ENCODE measurements at regions of chr15 and their contacts with region 1.

Region 1: DNA sequence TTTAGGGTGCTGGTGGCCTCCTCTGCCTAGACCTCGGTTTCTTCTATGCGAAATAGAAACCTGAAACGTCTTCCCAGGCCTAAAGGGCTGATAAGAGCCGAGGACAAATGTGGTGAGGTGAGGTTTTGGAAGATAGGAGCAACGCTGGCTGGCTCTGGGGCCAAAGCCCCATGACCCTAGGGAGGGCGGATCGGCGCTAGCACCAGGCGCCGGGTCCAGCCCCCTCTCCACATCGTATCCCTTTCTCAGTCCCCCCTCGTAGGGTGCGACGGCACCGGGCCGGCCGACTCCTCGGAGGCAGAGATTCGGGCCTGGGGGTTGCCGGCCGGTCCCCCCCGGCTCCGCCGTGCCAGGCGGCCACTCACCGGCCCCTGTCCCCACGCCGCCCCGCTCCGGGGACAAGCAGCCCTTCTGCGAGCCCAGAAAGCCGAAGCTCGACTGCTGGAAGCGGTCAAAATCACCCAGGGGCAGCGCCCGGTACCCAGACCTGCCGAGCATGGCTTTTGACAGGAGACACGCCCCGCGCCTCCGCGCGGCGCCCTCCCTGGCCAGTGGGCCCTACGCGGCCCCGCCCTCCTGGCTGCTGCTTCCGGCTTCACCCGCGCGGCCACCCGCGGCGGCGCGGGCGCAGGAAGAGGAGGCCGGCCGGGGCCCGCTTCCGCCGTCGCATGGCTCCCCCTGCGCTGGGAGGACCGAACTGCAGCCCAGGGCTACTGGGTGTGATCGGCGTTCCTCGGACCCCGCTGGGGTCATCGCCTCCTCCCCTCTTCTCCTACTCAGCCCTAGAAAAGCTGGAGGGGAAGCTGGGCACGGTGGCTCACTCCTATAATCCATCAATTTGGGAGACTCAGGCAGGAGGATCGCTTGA is at the start of gene STOML1:
- DNase-seq: peak; percentile 89 to 95
- H3K4me3 ChIP-seq: peak within 1 kb of the TSS; percentile 61
- H3K4me3 Mint-ChIP-seq: peak within 1 kb of the TSS; percentile 72
- H3K27ac Mint-ChIP-seq: no peak within 1 kb of the TSS
- H3K4me1 ChIP-seq: peaks cover 4% of the 10 kb centered on the region; the same call in 1 of the 2 replicates
- H3K4me1 Mint-ChIP-seq: peaks cover 18% of the 10 kb centered on the region
- H3K27me3 ChIP-seq: no peaks in the 10 kb centered on the region
- H3K27me3 Mint-ChIP-seq: no peaks in the 10 kb centered on the region
- CTCF ChIP-seq: peak; percentile 73 to 88
- total RNA-seq, gene STOML1: 7.6 TPM in 2 replicates

Region 2: GRCh38 chr15:74010929-74011540 is 19.1 kb after region 1 on chr15:
- CTCF ChIA-PET with region 1: interaction called, 5 read pairs
- POLR2A ChIA-PET with region 1: interaction called, 13 read pairs
- intact Hi-C with region 1: no loop called
- DNase-seq: peak in 1 of 2 experiments; percentile 13
- H3K4me3 ChIP-seq: no peak overlapping the region
- H3K4me3 Mint-ChIP-seq: no peak overlapping the region
- H3K27ac Mint-ChIP-seq: no peak overlapping the region
- H3K4me1 ChIP-seq: no peaks in the 10 kb centered on the region
- H3K4me1 Mint-ChIP-seq: peaks cover 11% of the 10 kb centered on the region
- H3K27me3 ChIP-seq: no peaks in the 10 kb centered on the region
- H3K27me3 Mint-ChIP-seq: no peaks in the 10 kb centered on the region
- CTCF ChIP-seq: no peak

Region 3: GRCh38 chr15:74036271-74037170 is 44.6 kb after region 1 on chr15:
- CTCF ChIA-PET with region 1: interaction called, 17 read pairs
- POLR2A ChIA-PET with region 1: interaction called, 4 read pairs
- intact Hi-C with region 1: loop called (anchors 5 kb)
- DNase-seq: peak; percentile 72 to 74
- H3K4me3 ChIP-seq: no peak overlapping the region
- H3K4me3 Mint-ChIP-seq: no peak overlapping the region
- H3K27ac Mint-ChIP-seq: no peak overlapping the region
- H3K4me1 ChIP-seq: no peaks in the 10 kb centered on the region
- H3K4me1 Mint-ChIP-seq: no peaks in the 10 kb centered on the region
- H3K27me3 ChIP-seq: no peaks in the 10 kb centered on the region
- H3K27me3 Mint-ChIP-seq: no peaks in the 10 kb centered on the region
- CTCF ChIP-seq: peak; percentile 60 to 82

Region 4: DNA sequence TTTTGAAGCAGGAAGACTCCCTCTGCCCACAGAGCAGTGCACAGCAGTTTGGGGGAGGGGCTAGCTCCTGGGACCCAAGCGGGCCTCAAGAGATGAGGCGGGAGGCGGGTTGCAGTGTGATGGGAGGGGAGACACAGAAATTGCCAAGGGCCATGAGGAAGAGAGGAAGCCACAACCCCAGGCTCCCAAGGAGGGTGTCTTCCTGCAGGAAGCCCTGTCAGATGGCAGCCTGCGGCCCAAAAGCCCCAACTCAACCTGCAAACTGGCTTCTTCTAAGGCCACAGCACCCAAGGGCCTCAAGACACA is 131.1 kb after region 1 on chr15:
- CTCF ChIA-PET with region 1: no interaction called
- POLR2A ChIA-PET with region 1: no interaction called
- intact Hi-C with region 1: no loop called
- DNase-seq: no peak
- H3K4me3 ChIP-seq: no peak overlapping the region
- H3K4me3 Mint-ChIP-seq: no peak overlapping the region
- H3K27ac Mint-ChIP-seq: no peak overlapping the region
- H3K4me1 ChIP-seq: no peaks in the 10 kb centered on the region
- H3K4me1 Mint-ChIP-seq: no peaks in the 10 kb centered on the region
- H3K27me3 ChIP-seq: no peaks in the 10 kb centered on the region
- H3K27me3 Mint-ChIP-seq: peaks cover 21% of the 10 kb centered on the region
- CTCF ChIP-seq: no peak

Measured in Caco-2 (cell line).